Panc1 (cell line): ENCODE measurements at regions of chr20 and their contacts with region 1.

Region 1: GRCh38 chr20:16408981-16409380 is 164.3 kb downstream of the KIF16B start:
- DNase-seq: no peak
- ATAC-seq: no peak
- H3K4me3 ChIP-seq: no peak overlapping the region
- H3K27ac ChIP-seq: no peak overlapping the region
- H3K4me1 ChIP-seq: no peaks in the 10 kb centered on the region
- H3K27me3 ChIP-seq: no peaks in the 10 kb centered on the region
- CTCF ChIP-seq: no peak

Region 2: DNA sequence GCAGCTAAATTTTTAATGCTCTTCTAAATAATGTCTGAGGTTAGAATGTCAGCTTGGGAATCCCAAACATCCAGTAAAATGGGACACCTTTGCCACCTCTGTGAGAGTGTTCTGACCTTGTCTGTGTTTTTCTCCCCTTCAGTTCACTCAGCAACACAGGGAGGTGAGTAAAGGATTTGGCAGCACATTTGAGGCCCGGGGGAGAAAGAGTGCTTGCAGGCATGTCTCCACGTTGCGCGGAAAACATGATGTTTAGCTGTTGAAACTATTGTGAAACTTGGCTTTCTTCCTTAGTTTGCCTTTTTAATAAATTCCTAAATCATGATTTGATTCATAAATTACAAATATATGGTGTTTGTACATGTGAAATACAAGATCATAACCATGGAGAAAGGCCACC is 1363.7 kb before region 1 on chr20:
- CTCF ChIA-PET with region 1: no interaction called
- POLR2A ChIA-PET with region 1: interaction called, 26 read pairs
- in situ Hi-C with region 1: no loop called
- intact Hi-C with region 1: no loop called
- DNase-seq: no peak
- ATAC-seq: no peak
- H3K4me3 ChIP-seq: no peak overlapping the region
- H3K27ac ChIP-seq: no peak overlapping the region
- H3K4me1 ChIP-seq: no peaks in the 10 kb centered on the region
- H3K27me3 ChIP-seq: no peaks in the 10 kb centered on the region
- CTCF ChIP-seq: no peak